ENCODE measurements at regions of chr20 and their contacts with region 1.

Region 1: DNA sequence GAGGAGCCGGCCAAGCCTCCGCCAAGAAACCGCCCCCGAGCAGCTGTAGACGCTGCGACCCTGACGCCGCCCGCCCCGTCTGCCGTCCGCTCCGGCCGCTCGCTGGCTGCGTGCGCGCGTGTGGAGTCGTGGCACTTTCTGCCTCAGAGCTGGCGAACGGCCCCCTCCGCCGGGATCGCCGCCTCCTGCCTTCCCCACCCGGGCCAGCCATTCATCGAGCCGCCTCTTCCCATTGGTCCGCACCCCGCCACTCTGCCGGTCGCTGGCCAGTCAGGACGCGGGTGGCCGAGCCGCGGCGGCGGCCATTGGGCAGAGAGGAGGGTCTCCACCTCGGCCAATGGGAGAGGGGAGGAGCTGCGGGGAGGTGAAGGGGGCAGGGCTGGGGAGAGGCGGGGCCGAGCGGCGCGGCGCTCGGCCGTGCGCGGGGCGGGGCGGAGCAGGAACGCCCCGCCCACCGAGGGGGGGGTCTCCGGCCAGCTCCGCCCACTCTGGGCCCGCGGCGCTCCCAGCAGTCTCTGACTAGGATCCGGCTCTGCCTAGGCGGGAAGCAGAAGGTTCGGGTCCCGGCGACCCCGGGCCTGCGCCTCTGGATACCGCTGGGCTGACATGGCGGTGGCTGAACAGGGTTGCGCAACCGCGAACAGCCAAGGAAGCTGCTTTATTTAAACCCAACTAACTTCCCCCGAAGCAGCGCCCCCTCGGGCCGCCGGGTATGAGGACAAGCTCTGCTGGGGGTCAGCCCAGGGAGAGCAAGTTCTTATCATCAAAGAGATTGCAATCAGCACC is at the start of gene RRBP1:
- DNase-seq: peak; percentile 98
- ATAC-seq: peak; percentile 90
- H3K4me3 ChIP-seq: peak within 1 kb of the TSS; percentile 87 to 92 (median 92)
- H3K27ac ChIP-seq: peak within 1 kb of the TSS; percentile 87
- H3K4me1 ChIP-seq: peaks cover 59% of the 10 kb centered on the region
- H3K27me3 ChIP-seq: peaks cover 0 to 18% of the 10 kb centered on the region in 2 experiments; a peak in 4 of 5 replicates
- CTCF ChIP-seq: peak; percentile 89
- EP300 ChIP-seq: peak; percentile 51 to 93
- POLR2A ChIP-seq: peak; percentile 98 to 99
- RAD21 ChIP-seq: peak; percentile 92
- total RNA-seq, gene RRBP1: 97.1 and 222 TPM in 2 replicates

Region 2: DNA sequence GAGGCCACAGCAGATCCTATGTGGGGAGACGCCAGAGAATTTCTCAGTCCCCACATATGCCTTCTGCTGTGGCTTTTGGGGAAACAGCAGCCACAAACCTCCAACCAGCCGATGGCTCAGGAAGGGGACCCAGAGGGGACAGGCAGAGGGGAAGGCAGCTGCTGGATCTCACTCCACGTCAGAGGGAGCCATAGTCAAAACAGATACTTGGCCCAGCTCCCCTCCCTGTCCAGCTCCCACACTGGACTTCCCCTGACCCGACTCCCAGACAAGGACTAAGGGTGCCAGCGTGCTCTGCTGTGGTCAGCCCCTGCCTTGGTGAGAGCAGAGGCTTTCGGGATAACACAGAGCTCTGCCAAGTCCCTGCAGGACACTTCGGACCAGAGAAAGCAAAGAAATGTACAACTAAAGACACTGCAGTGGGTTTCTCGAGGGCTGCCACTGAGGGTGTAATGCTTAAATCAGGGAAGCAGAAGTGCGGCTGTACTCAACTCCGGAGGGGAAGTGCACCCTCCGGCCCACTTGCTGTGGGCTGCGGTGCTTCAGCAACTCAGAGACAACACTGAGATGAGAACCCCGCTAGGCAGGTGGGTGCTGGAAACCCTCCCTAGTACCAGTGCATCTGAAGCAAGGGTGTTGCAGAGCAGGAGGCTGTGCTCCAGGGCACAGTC is 47.5 kb before region 1 on chr20:
- CTCF ChIA-PET with region 1: no interaction called
- POLR2A ChIA-PET with region 1: no interaction called
- in situ Hi-C with region 1: no loop called
- intact Hi-C with region 1: no loop called
- DNase-seq: no peak
- ATAC-seq: no peak
- H3K4me3 ChIP-seq: no peak overlapping the region
- H3K27ac ChIP-seq: no peak overlapping the region
- H3K4me1 ChIP-seq: peaks cover 11% of the 10 kb centered on the region
- H3K27me3 ChIP-seq: no peaks in the 10 kb centered on the region
- CTCF ChIP-seq: no peak
- EP300 ChIP-seq: no peak
- POLR2A ChIP-seq: 0 out of 4 replicates have a peak, but pooled peaks of 1 of the 2 experiments have one; percentile 10
- RAD21 ChIP-seq: no peak

Region 3: GRCh38 chr20:17666481-17666880 is 15.8 kb before region 1 on chr20:
- CTCF ChIA-PET with region 1: no interaction called
- POLR2A ChIA-PET with region 1: interaction called, 18 read pairs
- in situ Hi-C with region 1: no loop called
- intact Hi-C with region 1: no loop called
- DNase-seq: no peak
- ATAC-seq: no peak
- H3K4me3 ChIP-seq: no peak overlapping the region
- H3K27ac ChIP-seq: no peak overlapping the region
- H3K4me1 ChIP-seq: peaks cover 59% of the 10 kb centered on the region
- H3K27me3 ChIP-seq: no peaks in the 10 kb centered on the region
- CTCF ChIP-seq: no peak
- EP300 ChIP-seq: no peak
- POLR2A ChIP-seq: no peak
- RAD21 ChIP-seq: no peak

Region 4: DNA sequence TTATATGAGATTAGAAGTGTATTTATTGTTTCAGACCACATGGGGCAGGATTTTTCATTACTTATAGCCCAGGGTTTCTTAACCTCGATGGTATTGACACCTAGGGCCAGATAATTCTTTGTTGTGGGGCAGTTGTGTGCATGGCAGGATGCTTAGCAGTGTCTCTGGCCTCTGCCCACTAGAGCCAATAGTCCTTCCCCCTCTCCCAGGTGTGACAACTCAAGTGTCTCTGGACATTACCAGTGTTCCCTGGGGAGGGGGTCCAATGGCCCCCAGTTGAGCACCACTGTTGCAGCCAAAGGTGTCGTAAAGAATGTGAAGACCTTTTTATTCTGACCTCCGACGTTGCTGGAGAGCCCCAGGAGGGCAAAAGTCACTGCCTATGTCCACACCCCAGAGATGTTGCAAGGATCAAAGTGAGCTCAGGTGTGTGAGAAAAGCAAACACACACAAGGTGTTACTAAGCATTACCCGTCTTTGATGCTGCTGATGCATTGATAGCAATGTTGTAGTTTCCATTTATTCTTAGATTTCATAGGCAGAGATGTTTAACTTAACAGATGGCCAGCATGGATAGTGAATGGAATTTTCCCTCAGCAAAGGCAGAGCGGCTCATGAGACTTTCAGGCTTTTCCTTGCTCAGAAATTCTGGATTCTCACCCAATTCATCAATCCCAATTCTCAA is 39.6 kb after region 1 on chr20:
- CTCF ChIA-PET with region 1: interaction called, 8 read pairs
- POLR2A ChIA-PET with region 1: interaction called, 81 read pairs
- in situ Hi-C with region 1: no loop called
- intact Hi-C with region 1: loop called (anchors 1 kb)
- DNase-seq: peak; percentile 99
- ATAC-seq: peak; percentile 91
- H3K4me3 ChIP-seq: peak overlapping the region in 1 of 3 experiments; percentile 8; a peak in 2 of 6 replicates
- H3K27ac ChIP-seq: peak overlapping the region; percentile 55
- H3K4me1 ChIP-seq: peaks cover 44% of the 10 kb centered on the region
- H3K27me3 ChIP-seq: peaks cover 4 to 65% of the 10 kb centered on the region in 2 experiments; a peak in 4 of 5 replicates
- CTCF ChIP-seq: peak; percentile 35; the same call in 1 of the 2 replicates
- EP300 ChIP-seq: peak; percentile 99; a peak in 3 of 4 replicates
- POLR2A ChIP-seq: no peak
- RAD21 ChIP-seq: peak; percentile 59; the same call in 1 of the 2 replicates

Region 5: GRCh38 chr20:17825960-17826843 is 143.9 kb after region 1 on chr20:
- CTCF ChIA-PET with region 1: no interaction called
- POLR2A ChIA-PET with region 1: interaction called, 11 read pairs
- in situ Hi-C with region 1: no loop called
- intact Hi-C with region 1: no loop called
- DNase-seq: peak; percentile 44
- ATAC-seq: peak; percentile 10; the same call in 1 of the 3 replicates
- H3K4me3 ChIP-seq: no peak overlapping the region
- H3K27ac ChIP-seq: no peak overlapping the region
- H3K4me1 ChIP-seq: peaks cover 88% of the 10 kb centered on the region
- H3K27me3 ChIP-seq: no peaks in the 10 kb centered on the region; a peak in 1 of 5 replicates
- CTCF ChIP-seq: no peak
- EP300 ChIP-seq: no peak
- POLR2A ChIP-seq: no peak
- RAD21 ChIP-seq: no peak

Region 6: DNA sequence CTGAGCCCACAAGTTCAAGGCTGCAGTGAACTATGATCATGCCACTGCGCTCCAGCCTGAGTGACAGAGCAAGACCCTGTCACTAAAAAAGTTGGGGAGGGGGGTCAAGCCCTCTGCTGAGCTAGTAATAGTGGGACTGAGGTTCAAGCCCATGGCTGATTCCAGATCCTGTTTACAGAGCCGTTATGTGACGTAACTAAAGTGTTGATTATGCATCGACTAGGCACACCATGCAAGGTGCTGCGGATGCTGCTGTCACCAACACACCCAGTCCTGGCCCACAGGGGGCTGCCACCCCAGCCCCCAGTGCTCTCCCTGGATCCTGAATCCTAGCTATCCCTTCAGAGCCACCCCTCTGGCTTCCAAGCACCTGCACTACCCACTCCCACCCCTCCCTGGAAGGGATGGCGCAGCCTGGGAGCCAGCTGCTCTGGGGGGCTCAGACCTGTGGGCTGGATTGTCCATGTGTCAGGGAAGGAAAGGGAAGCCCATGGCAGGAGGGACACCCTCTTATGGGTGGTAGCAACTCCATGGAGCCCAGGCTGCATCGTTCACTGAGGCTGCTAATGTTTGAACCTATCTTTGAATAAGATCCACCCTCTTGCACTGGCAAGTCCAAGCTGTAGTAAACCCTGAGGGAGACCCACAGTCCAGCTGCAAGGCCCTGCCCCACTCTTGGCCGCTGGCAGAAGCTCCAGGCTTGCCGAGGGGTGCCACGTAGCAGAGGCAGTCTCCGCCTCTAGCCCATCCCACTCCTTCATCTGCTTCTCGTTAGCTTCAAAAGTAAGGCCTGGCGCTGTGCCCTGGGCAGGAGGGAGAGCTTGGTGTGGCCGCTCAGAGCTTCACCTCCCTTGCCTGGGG is 191.3 kb after region 1 on chr20:
- CTCF ChIA-PET with region 1: no interaction called
- POLR2A ChIA-PET with region 1: interaction called, 117 read pairs
- in situ Hi-C with region 1: no loop called
- intact Hi-C with region 1: no loop called
- DNase-seq: peak; percentile 91
- ATAC-seq: peak; percentile 71
- H3K4me3 ChIP-seq: peak overlapping the region in 2 of 3 experiments; percentile 1 to 55; a peak in 3 of 6 replicates
- H3K27ac ChIP-seq: peak overlapping the region; percentile 78
- H3K4me1 ChIP-seq: peaks cover 86% of the 10 kb centered on the region
- H3K27me3 ChIP-seq: no peaks in the 10 kb centered on the region
- CTCF ChIP-seq: peak; percentile 12; the same call in 1 of the 2 replicates
- EP300 ChIP-seq: no peak; a peak in 1 of 4 replicates
- POLR2A ChIP-seq: peak; percentile 73 to 77
- RAD21 ChIP-seq: peak; percentile 11

Region 7: DNA sequence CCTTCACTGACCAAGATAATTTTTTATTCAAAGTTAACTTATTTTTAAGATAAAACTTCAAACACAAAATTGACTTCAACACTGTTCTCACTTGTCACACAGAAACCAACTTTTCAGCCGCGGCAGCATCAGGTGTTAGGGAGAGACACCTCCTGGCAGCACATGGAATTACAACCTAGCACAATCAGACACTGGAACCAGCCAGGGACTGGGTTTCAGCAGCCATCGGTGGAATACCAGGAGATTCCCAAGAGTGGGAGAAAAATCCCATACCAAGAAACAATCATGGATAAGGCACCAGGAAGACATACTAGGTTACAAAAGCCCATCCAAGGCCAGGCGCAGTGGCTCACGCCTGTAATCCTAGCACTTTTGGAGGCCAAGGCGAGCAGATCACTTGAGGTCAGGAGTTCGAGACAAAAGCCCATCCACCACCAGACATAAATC is 216.3 kb after region 1 on chr20:
- CTCF ChIA-PET with region 1: interaction called, 29 read pairs
- POLR2A ChIA-PET with region 1: interaction called, 80 read pairs
- in situ Hi-C with region 1: no loop called
- intact Hi-C with region 1: loop called (anchors 1 kb)
- DNase-seq: peak; percentile 80
- ATAC-seq: peak; percentile 10; the same call in 2 of the 3 replicates
- H3K4me3 ChIP-seq: no peak overlapping the region
- H3K27ac ChIP-seq: no peak overlapping the region
- H3K4me1 ChIP-seq: peaks cover 52% of the 10 kb centered on the region
- H3K27me3 ChIP-seq: peaks cover 0 to 16% of the 10 kb centered on the region in 2 experiments; a peak in 4 of 5 replicates
- CTCF ChIP-seq: peak; percentile 98
- EP300 ChIP-seq: 0 out of 4 replicates have a peak, but pooled peaks of 1 of the 2 experiments have one; percentile 24
- POLR2A ChIP-seq: no peak
- RAD21 ChIP-seq: peak; percentile 99

Measured in HepG2 (cell line).